ENCODE measurements at regions of chr13 and their contacts with region 1.

Region 1: DNA sequence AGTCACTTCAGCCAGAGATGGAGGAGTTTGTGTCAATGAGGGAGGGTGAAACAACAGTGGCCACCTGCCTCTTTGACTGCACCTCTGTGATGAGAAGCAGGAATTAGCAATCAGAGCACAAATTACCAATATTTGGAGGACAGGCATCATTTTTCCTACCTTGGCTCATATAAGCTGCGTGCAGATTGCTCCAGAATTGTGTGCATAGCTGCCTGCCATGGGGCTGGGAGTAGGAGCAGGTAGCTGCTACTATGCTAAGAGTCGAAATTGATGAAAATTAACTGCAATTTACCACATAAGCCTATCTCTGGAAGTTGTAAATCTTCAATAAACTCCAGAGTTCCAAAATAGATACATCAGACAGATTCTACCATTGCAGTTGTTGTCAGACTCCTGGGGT is 167.5 kb upstream of the HTR2A start:
- DNase-seq: no peak
- H3K4me3 ChIP-seq: no peak overlapping the region
- H3K27ac ChIP-seq: no peak overlapping the region
- H3K4me1 ChIP-seq: no peaks in the 10 kb centered on the region
- H3K27me3 ChIP-seq: no peaks in the 10 kb centered on the region
- CTCF ChIP-seq: no peak
- POLR2A ChIP-seq: no peak

Region 2: DNA sequence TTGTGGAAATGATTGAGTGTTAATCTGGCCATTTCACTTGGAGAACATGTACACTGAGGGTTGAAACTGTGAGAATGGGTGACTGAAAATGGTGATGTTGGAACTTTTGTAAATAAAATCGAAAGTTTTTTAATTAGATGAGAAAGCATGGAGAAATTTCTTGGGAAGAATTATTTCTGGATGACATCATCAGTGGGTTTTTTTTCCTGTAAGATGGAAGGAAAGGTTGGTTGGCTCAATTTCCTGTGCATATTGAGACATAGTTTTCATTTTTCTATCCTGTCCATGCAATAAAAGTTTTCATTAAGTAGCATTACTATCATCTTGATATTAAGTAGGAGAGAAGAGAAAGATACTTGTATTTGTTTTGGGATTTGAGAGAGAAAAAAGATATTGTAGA is 46.9 kb before region 1 on chr13:
- intact Hi-C with region 1: loop called (anchors 5 kb)
- DNase-seq: no peak
- H3K4me3 ChIP-seq: no peak overlapping the region
- H3K27ac ChIP-seq: no peak overlapping the region
- H3K4me1 ChIP-seq: no peaks in the 10 kb centered on the region
- H3K27me3 ChIP-seq: no peaks in the 10 kb centered on the region
- CTCF ChIP-seq: no peak
- POLR2A ChIP-seq: no peak

Region 3: DNA sequence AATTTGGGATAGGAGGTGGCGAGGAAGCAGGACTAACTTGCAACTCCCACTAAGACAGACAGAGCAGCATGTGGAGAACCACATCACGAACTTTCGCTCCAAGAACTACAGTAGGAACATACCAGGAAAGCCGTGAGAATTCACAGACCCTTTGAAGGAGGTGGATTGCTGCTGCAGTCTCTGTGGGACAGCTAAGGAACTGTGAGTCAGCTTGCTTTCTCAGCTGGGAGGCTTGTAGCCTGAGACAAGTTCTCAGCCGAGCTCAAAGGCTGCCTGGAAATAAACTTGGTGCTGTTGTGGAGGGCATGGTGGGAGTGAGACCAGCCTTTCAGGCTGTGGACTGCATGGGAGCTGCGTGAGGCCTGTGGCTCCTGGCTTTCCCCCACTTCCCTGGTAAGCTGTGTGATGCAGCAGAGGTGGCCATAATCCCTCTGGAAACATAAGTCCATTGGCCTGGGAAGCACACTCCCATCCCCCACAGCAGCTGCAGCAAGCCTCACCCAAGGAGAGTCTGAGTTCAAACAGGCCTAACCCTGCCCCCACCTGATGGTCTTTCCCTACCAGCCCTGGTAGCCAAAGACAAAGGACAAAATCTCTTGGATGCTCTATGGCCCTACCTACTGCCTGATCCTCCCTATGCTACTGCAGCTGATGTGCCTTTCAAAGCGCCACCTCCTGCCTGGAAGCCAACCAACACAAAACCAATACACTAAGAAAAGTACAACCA is 273.6 kb after region 1 on chr13:
- intact Hi-C with region 1: no loop called
- DNase-seq: no peak
- H3K4me3 ChIP-seq: no peak overlapping the region
- H3K27ac ChIP-seq: no peak overlapping the region
- H3K4me1 ChIP-seq: no peaks in the 10 kb centered on the region
- H3K27me3 ChIP-seq: no peaks in the 10 kb centered on the region
- CTCF ChIP-seq: no peak
- POLR2A ChIP-seq: no peak

Region 4: GRCh38 chr13:47696674-47697073 is 632.3 kb after region 1 on chr13:
- intact Hi-C with region 1: loop called (anchors 5 kb)
- DNase-seq: no peak
- H3K4me3 ChIP-seq: no peak overlapping the region
- H3K27ac ChIP-seq: no peak overlapping the region
- H3K4me1 ChIP-seq: no peaks in the 10 kb centered on the region
- H3K27me3 ChIP-seq: no peaks in the 10 kb centered on the region
- CTCF ChIP-seq: no peak
- POLR2A ChIP-seq: no peak